Activated CD4-positive, alpha-beta memory T cell treated with anti-CD3 and anti-CD28 coated beads for 36 hours (primary cell): ENCODE measurements at regions of chr5 and their contacts with region 1.

Region 1: GRCh38 chr5:69189162-69190086 is at the start of gene CENPH:
- DNase-seq: peak; percentile 96
- H3K4me3 Mint-ChIP-seq: peak within 1 kb of the TSS; percentile 90
- H3K27ac Mint-ChIP-seq: peak within 1 kb of the TSS; percentile 89
- H3K4me1 Mint-ChIP-seq: peaks cover 6% of the 10 kb centered on the region
- H3K27me3 Mint-ChIP-seq: no peaks in the 10 kb centered on the region
- total RNA-seq, gene CENPH: 80.7 to 82.0 TPM

Region 2: DNA sequence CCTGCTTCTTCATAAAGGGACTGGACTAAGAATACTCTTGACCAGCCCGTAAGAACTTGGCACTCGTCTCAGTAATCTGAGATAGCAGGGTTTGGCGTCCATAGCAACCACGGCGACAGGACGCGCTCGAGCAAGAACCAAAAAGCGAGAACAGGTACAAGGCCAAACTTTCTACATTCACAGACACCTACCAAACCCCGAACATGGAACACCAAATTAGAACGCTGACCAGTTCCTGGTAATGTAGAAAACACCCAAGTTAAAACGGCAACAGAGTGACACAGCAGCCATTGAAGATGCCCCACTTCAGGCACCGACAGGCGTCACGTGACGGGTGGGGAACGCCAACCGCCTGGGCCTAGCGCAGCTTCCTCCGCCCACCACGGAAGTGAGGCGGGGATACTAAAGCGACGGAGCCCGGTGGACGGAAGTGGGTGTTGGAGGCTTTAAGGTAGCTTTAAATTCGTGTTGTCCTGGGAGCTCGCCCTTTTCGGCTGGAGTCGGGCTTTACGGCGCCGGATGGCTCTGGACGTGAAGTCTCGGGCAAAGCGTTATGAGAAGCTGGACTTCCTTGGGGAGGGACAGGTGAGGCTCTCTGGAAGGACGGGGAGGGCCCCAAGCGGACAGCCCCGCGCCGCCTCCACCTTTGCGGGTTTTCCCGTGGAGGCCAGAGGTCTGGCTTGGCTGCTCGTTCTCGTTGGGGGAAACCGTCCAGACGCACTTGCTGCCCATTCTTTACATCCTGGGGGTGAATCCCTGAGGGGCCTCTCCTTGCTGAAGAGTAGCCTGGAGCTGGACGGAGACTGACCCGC is 45.2 kb after region 1 on chr5 and contains the start of gene CDK7:
- CTCF ChIA-PET with region 1: interaction called, 3 read pairs
- POLR2A ChIA-PET with region 1: interaction called, 4 read pairs
- intact Hi-C with region 1: loop called (anchors 1 kb)
- DNase-seq: peak; percentile 96
- H3K4me3 Mint-ChIP-seq: peak within 1 kb of the TSS; percentile 98
- H3K27ac Mint-ChIP-seq: peak within 1 kb of the TSS; percentile 81
- H3K4me1 Mint-ChIP-seq: peaks cover 36% of the 10 kb centered on the region
- H3K27me3 Mint-ChIP-seq: no peaks in the 10 kb centered on the region
- total RNA-seq, gene CDK7: 36.2 to 41.2 TPM